Right cardiac atrium (tissue), 5 donors: ENCODE measurements at regions of chr18 and their contacts with region 1.

Region 1: GRCh38 chr18:12092398-12093229 is 1.0 kb upstream of the ANKRD62 start:
- DNase-seq: peak in 2 of 3 donors; percentile 63 to 67
- ATAC-seq: peak; percentile 72 to 76
- H3K4me3 ChIP-seq: no peak overlapping the region
- H3K27ac ChIP-seq: no peak overlapping the region
- H3K4me1 ChIP-seq: no peaks in the 10 kb centered on the region
- H3K27me3 ChIP-seq: no peaks in the 10 kb centered on the region

Region 2: DNA sequence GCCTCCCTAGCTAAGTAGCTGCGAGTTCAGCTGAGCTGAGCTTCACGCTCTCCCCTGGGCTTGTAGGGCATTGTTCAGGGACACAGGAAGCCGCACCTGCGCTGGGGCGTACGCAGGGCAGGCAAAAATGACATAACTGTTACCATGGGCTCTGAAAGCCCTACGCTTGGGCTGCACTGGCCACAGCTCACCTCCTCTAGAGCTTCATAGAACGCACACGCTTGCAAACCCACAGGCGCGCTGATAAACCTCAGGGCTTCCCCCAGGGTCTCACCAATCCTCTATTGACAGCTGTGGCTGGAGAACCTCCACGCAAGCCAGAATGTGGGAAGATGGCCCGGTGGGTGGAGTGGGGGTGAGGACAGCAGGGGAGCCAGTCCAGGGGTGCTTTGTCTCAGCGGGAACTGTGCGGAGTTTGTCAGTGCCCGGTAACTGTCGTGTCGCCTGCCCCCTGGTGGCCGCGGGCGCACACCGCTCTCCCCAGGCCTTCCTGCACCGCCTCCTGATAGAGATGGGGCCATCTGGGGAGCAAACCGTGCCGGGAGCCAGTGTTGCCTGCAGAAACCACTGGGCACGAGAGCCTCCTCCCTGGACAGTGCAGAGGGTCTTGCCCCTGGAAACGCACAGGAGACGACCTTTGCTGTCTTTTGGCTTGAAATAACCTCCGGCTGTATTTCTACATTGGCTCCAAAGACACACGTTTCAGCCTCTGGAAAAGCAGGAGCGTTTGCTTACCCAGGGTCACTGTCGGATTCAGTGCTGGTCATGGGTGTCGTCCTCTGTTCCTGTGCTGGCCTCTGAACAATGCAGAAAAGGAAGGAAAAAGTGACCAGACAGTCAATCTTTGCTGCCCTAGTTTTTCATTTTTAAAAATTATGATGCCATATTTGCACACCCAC is 144.6 kb after region 1 on chr18:
- intact Hi-C with region 1: loop called in 3 of 4 experiments (anchors 5 to 10 kb)
- DNase-seq: peak; percentile 76 to 92 (median 92)
- ATAC-seq: peak; percentile 92 to 96
- H3K4me3 ChIP-seq: no peak overlapping the region
- H3K27ac ChIP-seq: no peak overlapping the region
- H3K4me1 ChIP-seq: no peaks in the 10 kb centered on the region
- H3K27me3 ChIP-seq: no peaks in the 10 kb centered on the region

Region 3: GRCh38 chr18:12246849-12247808 is 154.5 kb after region 1 on chr18:
- intact Hi-C with region 1: loop called in 1 of 4 experiments (anchors 10 kb)
- DNase-seq: peak in 1 of 3 donors; percentile 66
- ATAC-seq: peak in 1 of 2 donors; percentile 30
- H3K4me3 ChIP-seq: no peak overlapping the region
- H3K27ac ChIP-seq: no peak overlapping the region
- H3K4me1 ChIP-seq: no peaks in the 10 kb centered on the region
- H3K27me3 ChIP-seq: no peaks in the 10 kb centered on the region

Region 4: DNA sequence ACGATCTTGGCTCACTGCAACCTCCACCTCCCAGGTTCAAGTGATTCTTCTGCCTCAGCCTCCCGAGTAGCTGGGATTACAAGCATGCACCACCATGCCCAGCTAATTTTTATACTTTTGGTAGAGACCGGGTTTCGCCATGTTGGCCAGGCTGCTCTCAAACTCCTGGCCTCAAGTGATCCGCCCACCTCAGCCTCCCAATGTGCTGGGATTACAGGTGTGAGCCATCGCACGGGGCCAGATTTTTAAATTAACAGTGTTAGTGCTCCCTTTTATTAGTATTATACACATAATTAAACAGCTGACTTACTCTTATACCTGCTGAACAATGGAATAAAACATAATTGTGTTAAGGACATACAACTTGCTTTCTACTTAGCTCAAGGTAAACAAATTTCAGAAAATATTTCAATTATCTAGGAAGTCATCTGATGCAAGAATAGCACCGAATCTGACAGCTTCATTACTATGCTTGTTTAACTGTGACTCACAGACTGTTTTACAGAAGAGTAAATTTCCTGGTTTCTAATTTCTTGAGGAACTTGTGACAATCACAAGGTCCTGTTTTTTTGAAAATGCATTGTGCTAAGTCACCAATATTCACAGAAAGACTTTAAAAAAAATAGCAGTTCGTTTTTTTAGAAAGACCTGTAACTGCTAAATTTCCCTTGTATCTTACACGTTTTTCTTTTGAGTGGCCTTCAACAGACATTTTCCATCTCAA is 514.1 kb after region 1 on chr18:
- intact Hi-C with region 1: no loop called
- DNase-seq: no peak
- ATAC-seq: no peak
- H3K4me3 ChIP-seq: no peak overlapping the region
- H3K27ac ChIP-seq: no peak overlapping the region
- H3K4me1 ChIP-seq: no peaks in the 10 kb centered on the region
- H3K27me3 ChIP-seq: no peaks in the 10 kb centered on the region